ENCODE measurements at regions of chr4 and their contacts with region 1.

Region 1: DNA sequence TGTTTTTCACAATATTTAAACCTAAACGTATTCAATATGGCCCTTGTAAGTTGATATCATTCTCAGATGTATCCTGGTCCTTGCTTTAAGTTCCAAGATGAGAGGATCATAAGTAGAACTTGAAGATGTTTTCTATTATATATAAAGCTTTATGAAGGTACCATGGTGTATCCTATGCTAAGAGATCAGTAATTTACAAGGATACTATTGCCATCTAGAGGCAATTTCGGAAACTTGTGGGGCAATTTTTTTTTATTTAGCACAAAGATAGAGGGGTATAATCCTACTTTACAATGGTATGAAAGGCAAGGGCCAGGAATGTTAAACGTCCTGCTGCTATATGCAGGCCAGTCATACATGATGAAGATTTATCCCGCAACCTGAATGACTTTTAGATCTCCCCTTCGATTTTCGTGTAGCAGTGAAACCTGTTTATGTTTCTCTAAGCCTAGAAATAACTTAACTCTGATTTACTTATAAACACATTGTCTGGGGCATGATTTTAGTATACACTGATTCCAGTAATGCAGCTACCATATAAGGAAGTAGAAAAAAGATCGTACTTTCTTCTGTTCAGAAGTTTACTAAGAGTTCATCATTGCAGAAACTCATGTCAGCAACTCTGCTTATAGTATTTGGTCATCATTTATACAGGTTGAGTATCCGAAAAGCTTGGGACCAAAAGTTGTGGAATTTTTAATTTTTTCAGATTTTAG is 2.6 kb downstream of the SLC25A31 start:
- DNase-seq: no peak
- H3K4me3 Mint-ChIP-seq: no peak overlapping the region
- H3K27ac Mint-ChIP-seq: no peak overlapping the region
- H3K4me1 Mint-ChIP-seq: no peaks in the 10 kb centered on the region
- H3K27me3 Mint-ChIP-seq: peaks cover 7% of the 10 kb centered on the region

Region 2: DNA sequence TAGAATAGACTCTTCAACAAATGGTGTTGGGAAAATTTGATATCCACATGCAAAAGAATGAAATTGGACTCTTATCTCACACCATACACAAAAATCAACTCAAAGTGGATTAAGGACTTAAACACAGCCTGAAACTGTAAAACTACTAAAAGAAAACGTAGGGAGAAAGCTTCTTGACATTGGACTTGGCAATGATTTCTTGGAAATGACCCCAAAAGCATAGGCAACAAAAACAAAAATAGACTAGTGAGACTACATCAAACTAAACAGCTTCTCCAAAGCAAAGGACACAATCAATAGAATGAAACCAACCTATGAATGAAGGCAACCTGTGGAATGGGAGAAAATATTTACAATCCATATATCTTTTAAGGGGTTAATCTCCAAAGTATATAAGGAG is 194.8 kb before region 1 on chr4:
- CTCF ChIA-PET with region 1: no interaction called
- intact Hi-C with region 1: loop called (anchors 5 kb)
- DNase-seq: no peak
- H3K4me3 Mint-ChIP-seq: no peak overlapping the region
- H3K27ac Mint-ChIP-seq: no peak overlapping the region
- H3K4me1 Mint-ChIP-seq: no peaks in the 10 kb centered on the region
- H3K27me3 Mint-ChIP-seq: peaks cover 16% of the 10 kb centered on the region

Measured in activated naive CD4-positive, alpha-beta T cell treated with anti-CD3 and anti-CD28 coated beads for 36 hours (primary cell).